WTC11 (cell line): ENCODE measurements at regions of chr19 and their contacts with region 1.

Region 1: DNA sequence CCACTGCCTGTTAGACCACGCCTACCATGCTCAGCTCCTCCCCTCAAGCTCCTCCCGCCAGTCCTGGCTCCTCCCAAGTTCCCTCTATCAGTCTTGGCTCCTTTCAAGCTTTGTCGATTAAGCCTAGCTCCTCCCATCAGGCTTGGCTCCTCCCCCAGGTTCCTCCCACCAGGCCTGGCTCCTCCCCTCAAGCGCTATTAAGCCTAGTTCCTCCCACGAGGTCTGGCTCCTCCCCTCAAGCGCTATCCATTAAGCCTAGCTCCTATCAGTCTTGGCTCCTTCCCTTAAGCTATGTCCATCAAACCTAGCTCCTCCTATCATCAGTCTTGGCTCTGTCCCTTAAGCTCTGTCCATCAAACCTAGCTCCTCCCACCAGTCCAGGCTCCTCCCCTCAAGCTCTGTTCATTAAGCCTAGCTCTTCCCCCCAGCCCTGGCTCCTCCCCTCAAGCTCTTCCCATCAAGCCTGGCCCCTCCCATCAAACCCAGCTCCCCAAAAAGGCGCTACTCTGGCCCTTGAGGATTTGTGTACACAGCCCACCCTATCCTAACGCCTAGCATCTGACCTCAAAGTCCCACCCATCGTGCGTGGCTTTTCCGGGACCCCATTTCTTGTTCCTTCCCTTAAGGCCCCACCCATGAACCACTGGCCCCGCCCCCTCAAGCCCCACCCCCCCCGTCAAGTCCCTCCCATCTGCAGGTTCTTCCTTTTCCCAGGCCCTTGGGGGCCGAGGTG is 10.0 kb downstream of the CAMSAP3 start:
- DNase-seq: peak; percentile 89
- ATAC-seq: peak; percentile 89
- H3K4me3 Mint-ChIP-seq: no peak overlapping the region
- H3K27ac Mint-ChIP-seq: no peak overlapping the region; the same call in 1 of the 2 replicates
- H3K4me1 Mint-ChIP-seq: peaks cover 10% of the 10 kb centered on the region
- H3K27me3 Mint-ChIP-seq: no peaks in the 10 kb centered on the region
- CTCF ChIP-seq: no peak

Region 2: GRCh38 chr19:7595466-7596133 is 10.1 kb before region 1 on chr19 and contains the start of gene CAMSAP3:
- CTCF ChIA-PET with region 1: interaction called, 16 read pairs
- POLR2A ChIA-PET with region 1: interaction called, 3 read pairs
- DNase-seq: peak; percentile 90
- ATAC-seq: peak; percentile 96
- H3K4me3 Mint-ChIP-seq: peak within 1 kb of the TSS; percentile 79
- H3K27ac Mint-ChIP-seq: no peak within 1 kb of the TSS
- H3K4me1 Mint-ChIP-seq: peaks cover 17% of the 10 kb centered on the region
- H3K27me3 Mint-ChIP-seq: peaks cover 17% of the 10 kb centered on the region
- CTCF ChIP-seq: no peak
- total RNA-seq, gene CAMSAP3: 27.8 to 34.6 TPM (median 32.1 TPM) in 3 replicates